ENCODE measurements at regions of chr20 and their contacts with region 1.

Region 1: GRCh38 chr20:22684072-22684762 is 99.8 kb upstream of the FOXA2 start:
- DNase-seq: peak; percentile 62
- ATAC-seq: peak; percentile 89

Region 2: DNA sequence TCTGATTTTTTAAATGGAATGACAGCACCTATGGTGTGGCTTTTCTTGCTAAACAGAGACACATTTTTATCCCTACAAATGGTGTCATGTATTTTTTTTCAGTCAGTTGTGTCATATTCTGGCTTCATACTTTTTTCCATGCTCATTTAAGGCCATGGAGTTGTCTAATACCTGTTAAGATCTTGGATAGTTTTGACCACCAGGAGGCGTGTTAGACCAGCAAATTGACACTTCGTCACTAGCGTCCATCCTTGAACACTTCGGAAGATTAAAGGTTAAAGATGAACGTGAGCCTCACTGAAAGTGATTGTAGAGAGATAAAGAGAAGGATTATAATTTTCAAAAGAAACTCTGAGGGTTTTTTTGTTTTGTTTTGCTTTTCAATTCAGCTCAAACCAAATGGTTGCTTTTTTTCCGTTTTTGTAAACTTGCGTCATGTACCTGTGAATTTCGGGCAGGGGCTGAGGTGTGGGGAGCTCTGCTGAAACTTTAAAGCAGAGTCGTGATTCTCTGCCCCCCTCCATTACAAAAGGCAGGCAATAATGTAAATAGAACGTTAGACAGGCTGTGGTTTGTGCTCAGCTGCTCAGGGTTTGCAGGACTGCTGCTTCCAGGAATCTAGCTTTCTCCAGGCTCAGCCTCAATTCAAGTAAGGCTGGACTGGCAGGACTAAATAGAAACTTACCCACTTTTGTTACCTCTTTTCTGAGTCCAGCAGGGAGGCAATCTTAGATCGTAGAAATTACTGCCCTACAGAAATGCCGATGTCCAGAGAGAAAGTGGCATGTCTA is 344.9 kb before region 1 on chr20:
- intact Hi-C with region 1: loop called (anchors 5 kb)
- DNase-seq: no peak
- ATAC-seq: peak; percentile 65

Region 3: GRCh38 chr20:23235173-23236027 is 551.2 kb after region 1 on chr20:
- intact Hi-C with region 1: loop called (anchors 5 kb)
- DNase-seq: peak; percentile 86
- ATAC-seq: peak; percentile 97

Measured in Right ventricle myocardium superior (tissue), 1 donor.